Tibial artery (tissue), 4 donors: ENCODE measurements at regions of chr16 and their contacts with region 1.

Region 1: DNA sequence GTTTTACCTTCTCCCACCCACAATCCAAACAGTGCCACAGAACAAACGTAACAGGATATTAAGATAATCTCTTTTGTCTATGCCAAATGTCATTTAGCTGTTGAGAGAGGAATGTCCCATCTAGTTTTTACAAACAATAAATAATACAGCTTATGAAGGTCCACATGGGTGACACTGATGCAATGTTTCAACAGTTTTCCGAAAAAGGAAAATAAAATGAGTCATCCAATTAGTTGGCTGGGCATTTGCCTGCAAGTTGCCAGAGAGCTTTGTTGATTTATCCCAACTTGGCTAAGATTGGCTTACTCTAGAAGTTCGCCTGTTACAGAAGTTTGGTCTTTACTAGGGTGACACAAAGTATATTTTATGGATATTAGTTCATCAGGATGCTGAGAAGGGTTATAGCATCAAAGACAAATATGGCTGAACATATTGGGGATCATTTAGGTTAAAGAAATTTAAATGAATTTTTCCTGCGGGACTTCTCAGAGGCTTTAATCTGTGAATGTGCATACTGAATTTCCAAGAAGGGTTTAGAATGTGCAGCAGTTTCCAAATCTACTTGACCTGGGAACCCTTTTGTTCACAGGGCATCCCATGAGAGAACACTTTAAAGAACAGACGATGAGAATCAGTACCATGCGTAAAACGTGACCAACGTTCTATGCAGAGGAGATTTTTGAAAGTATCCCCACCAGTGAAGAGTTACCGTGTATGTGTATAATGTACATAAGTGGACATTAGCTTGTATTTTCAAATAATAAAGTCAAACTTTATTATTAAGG is 73.1 kb downstream of the CDH13 start:
- DNase-seq: peak; percentile 40 to 67
- H3K4me3 ChIP-seq: no peak overlapping the region
- H3K27ac ChIP-seq: peak overlapping the region; percentile 70
- H3K4me1 ChIP-seq: peaks cover 0 to 45% (median 34%) of the 10 kb centered on the region in 4 donors
- H3K27me3 ChIP-seq: no peaks in the 10 kb centered on the region
- CTCF ChIP-seq: no peak

Region 2: DNA sequence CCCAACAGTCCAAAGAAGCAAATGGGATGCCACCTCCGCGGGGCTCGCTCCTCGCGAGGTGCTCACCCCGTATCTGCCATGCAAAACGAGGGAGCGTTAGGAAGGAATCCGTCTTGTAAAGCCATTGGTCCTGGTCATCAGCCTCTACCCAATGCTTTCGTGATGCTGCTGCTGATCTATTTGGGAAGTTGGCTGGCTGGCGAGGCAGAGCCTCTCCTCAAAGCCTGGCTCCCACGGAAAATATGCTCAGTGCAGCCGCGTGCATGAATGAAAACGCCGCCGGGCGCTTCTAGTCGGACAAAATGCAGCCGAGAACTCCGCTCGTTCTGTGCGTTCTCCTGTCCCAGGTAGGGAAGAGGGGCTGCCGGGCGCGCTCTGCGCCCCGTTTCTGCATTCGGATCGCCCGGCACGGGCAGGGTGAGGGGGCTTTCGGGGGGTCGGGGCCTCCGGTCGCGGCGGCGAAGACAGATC is 73.1 kb before region 1 on chr16 and contains the start of gene CDH13:
- intact Hi-C with region 1: loop called (anchors 5 kb)
- DNase-seq: peak; percentile 54 to 73
- H3K4me3 ChIP-seq: peak within 1 kb of the TSS; percentile 74 to 84
- H3K27ac ChIP-seq: peak within 1 kb of the TSS; percentile 79 to 89
- H3K4me1 ChIP-seq: peaks cover 0 to 51% (median 40%) of the 10 kb centered on the region in 4 donors
- H3K27me3 ChIP-seq: no peaks in the 10 kb centered on the region
- CTCF ChIP-seq: no peak